ENCODE measurements at regions of chr6 and their contacts with region 1.

Region 1: DNA sequence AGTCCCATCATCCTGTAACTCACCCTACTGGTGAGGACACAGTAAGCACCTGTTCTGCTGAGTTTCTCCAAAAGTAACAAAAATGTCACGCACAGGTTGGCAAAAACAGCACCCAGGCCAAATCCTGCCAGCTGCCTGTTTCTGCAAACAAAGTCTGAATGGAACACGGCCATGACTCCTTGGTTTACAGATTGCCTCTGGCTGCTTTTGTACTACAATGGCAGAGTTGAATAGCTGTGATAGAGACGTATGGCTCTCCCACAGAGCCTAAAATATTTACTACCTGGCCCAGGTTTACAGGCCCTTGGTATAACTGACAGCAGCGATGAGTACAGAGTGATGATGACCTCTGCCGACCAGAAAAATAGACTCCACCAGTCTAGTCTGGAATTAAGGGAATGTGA is 52.6 kb downstream of the CNKSR3 start:
- DNase-seq: no peak
- H3K4me3 ChIP-seq: no peak overlapping the region
- H3K27ac ChIP-seq: no peak overlapping the region
- H3K4me1 ChIP-seq: no peaks in the 10 kb centered on the region
- CTCF ChIP-seq: no peak

Region 2: GRCh38 chr6:154432533-154433476 is 25.1 kb before region 1 on chr6:
- CTCF ChIA-PET with region 1: no interaction called
- POLR2A ChIA-PET with region 1: no interaction called
- intact Hi-C with region 1: no loop called
- DNase-seq: no peak
- H3K4me3 ChIP-seq: no peak overlapping the region
- H3K27ac ChIP-seq: no peak overlapping the region
- H3K4me1 ChIP-seq: no peaks in the 10 kb centered on the region
- CTCF ChIP-seq: no peak

Region 3: DNA sequence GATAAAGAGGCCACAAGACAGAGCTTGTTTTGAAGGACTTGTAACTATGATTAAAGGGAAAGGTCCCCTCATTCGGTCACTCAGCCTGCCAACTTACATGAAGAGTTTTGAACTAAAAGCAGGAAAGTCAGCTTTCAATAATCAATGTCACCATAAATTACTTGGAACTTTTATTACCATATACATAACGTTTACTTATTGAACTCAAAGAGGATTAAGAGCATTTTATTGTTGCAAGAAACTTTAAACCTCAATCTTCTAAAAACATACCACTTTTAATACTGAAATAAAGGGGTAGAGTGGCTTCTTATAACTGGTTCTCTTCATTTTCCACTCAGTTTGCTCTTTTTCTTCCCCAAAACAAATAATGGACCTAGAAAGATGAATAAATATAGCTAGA is 12.5 kb before region 1 on chr6:
- CTCF ChIA-PET with region 1: no interaction called
- POLR2A ChIA-PET with region 1: interaction called, 11 read pairs
- intact Hi-C with region 1: no loop called
- DNase-seq: no peak
- H3K4me3 ChIP-seq: no peak overlapping the region
- H3K27ac ChIP-seq: no peak overlapping the region
- H3K4me1 ChIP-seq: no peaks in the 10 kb centered on the region
- CTCF ChIP-seq: no peak

Region 4: DNA sequence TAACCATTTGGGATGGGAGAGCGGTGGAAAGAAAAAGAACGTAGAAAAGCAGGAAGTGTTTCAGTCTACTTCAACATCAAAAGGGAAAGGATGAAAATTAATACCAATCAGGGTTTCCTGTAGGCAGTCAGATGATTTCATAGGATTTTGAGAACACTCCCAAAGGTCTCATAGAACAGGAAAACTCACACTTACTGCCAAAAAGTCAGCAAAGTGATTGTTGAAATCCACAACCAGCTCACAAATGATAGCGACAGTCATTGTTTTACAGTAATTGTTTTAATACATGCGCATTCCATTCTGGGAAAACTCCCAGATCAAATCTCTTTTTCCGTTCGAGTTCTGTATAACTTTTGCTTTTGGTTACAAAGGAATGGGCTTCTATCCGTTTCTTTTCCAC is 57.9 kb after region 1 on chr6:
- CTCF ChIA-PET with region 1: no interaction called
- POLR2A ChIA-PET with region 1: no interaction called
- intact Hi-C with region 1: no loop called
- DNase-seq: no peak
- H3K4me3 ChIP-seq: no peak overlapping the region
- H3K27ac ChIP-seq: no peak overlapping the region
- H3K4me1 ChIP-seq: no peaks in the 10 kb centered on the region
- CTCF ChIP-seq: no peak